BJ (cell line): ENCODE measurements at regions of chr5 and their contacts with region 1.

Region 1: DNA sequence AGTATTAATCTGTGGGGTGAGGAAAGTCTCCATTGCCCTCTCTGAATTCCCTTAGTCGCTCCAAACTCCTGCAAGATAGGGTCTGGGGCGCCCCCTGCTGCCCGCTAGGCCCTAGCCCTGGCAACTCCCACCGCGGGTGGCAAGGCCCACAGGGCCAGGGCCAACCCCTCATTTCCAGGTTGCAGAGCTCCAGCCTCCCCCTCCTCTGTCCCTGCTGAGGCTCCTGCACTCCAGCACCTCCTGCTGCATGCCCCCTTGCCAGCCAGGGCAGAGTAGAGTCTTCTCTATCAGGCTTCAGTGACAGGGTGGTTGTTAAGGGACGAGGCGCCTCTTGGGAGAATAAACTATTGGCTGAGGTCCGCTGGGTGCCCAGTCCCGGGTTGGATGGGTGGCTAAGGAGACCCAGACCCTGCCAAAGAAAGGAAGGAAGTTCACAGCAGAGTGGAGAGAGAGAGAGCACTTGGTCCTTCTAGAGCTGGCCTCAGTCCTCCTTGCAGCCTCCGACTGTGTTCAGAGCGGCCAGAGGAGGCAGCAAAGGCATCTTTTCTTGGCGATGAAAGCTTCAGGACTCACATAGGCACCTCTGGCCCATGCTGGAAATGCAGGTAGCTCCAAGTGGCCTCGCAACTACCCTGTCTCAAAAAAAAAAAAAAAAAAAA is 45.6 kb downstream of the SAR1B start:
- DNase-seq: no peak
- H3K4me3 ChIP-seq: no peak overlapping the region
- H3K27me3 ChIP-seq: no peaks in the 10 kb centered on the region
- CTCF ChIP-seq: peak; percentile 88

Region 2: GRCh38 chr5:134289509-134290113 is 297.4 kb before region 1 on chr5:
- CTCF ChIA-PET with region 1: interaction called, 12 read pairs
- POLR2A ChIA-PET with region 1: no interaction called
- DNase-seq: peak; percentile 19
- H3K4me3 ChIP-seq: no peak overlapping the region
- H3K27me3 ChIP-seq: no peaks in the 10 kb centered on the region; the same call in 1 of the 2 replicates
- CTCF ChIP-seq: peak; percentile 69

Region 3: GRCh38 chr5:134296213-134296612 is 290.8 kb before region 1 on chr5:
- CTCF ChIA-PET with region 1: interaction called, 39 read pairs
- POLR2A ChIA-PET with region 1: interaction called, 4 read pairs
- DNase-seq: no peak
- H3K4me3 ChIP-seq: no peak overlapping the region
- H3K27me3 ChIP-seq: no peaks in the 10 kb centered on the region
- CTCF ChIP-seq: no peak

Region 4: DNA sequence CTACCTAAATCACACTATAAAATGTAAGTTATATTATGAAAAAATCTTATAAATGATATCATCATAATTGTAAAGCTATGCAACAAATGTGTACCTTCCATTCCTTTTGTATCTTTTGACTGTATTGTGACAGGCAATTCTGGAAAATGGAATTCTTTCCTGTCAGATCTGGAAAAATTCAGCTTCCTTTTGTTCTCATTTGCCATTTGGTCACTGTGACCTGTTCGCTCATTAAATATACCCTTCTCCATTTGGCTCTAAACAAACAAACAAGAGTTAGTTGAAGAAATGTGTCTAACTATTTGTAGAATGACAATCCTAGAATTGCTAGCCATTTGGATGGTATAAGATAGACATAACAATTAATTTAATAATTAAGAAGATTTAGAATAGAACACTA is 282.7 kb before region 1 on chr5:
- CTCF ChIA-PET with region 1: interaction called, 39 read pairs
- POLR2A ChIA-PET with region 1: interaction called, 4 read pairs
- DNase-seq: no peak
- H3K4me3 ChIP-seq: no peak overlapping the region
- H3K27me3 ChIP-seq: no peaks in the 10 kb centered on the region
- CTCF ChIP-seq: no peak

Region 5: DNA sequence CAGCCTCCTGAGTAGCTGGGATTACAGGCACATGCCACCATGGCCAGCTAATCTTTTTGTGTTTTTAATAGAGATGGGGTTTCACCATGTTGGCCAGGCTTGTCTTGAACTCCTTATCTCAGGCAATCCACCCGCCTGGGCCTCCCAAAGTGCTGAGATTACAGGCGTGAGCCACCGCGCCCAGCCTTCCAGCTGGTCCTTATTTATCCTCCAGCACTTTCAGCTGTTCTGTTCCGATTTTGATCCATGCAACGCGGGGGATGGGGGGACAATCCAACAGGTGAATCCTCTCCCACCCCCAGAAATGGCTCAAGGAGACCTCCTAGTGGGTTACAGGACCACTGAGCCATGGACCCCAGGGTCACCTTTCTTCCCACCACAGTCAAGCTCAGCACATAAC is 160.6 kb before region 1 on chr5:
- CTCF ChIA-PET with region 1: no interaction called
- POLR2A ChIA-PET with region 1: no interaction called
- DNase-seq: no peak
- H3K4me3 ChIP-seq: no peak overlapping the region
- H3K27me3 ChIP-seq: no peaks in the 10 kb centered on the region
- CTCF ChIP-seq: no peak

Region 6: GRCh38 chr5:134600600-134600999 is 13.6 kb after region 1 on chr5:
- CTCF ChIA-PET with region 1: interaction called, 27 read pairs
- POLR2A ChIA-PET with region 1: interaction called, 15 read pairs
- DNase-seq: no peak
- H3K4me3 ChIP-seq: no peak overlapping the region
- H3K27me3 ChIP-seq: no peaks in the 10 kb centered on the region
- CTCF ChIP-seq: no peak

Region 7: DNA sequence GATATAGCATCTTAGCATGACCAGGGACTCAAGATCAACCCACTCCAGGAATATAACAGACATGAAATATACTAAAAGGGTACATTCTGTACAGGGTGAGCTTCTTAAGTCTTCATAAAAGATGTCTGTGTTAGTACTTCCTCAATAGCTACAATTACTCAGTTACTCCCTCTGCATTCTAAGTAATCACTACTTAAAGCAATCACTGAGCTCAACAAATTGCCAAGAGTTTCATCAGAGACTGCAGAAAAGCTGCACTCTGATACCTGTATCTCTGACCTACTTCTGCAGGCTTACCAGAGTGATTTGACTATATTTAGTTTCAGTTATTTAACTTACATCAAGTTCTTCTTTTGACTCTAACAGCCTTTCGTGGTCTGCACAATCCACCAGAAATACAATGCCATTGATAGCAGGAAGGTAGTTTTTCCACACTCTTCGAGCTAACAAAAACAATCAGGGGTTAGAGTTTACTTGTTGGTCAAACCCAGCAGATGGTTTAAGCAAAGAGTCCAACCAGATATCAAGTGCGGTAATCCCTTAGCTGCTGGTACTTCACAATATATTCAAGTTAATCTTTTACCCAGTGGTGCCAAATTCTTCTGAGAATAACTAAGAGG is 22.3 kb after region 1 on chr5:
- CTCF ChIA-PET with region 1: interaction called, 11 read pairs
- POLR2A ChIA-PET with region 1: no interaction called
- DNase-seq: no peak
- H3K4me3 ChIP-seq: no peak overlapping the region
- H3K27me3 ChIP-seq: no peaks in the 10 kb centered on the region
- CTCF ChIP-seq: no peak